HEK293T (cell line): ENCODE measurements at regions of chr3 and their contacts with region 1.

Region 1: GRCh38 chr3:49120438-49121131 is at the start of gene USP19:
- DNase-seq: peak; percentile 96

Region 2: GRCh38 chr3:48623851-48624547 is 496.6 kb before region 1 on chr3:
- CTCF ChIA-PET with region 1: no interaction called
- POLR2A ChIA-PET with region 1: no interaction called
- DNase-seq: no peak

Region 3: GRCh38 chr3:48684480-48685143 is 436.0 kb before region 1 on chr3:
- CTCF ChIA-PET with region 1: no interaction called
- POLR2A ChIA-PET with region 1: no interaction called
- DNase-seq: no peak

Region 4: GRCh38 chr3:48798998-48799397 is 321.6 kb before region 1 on chr3:
- CTCF ChIA-PET with region 1: no interaction called
- POLR2A ChIA-PET with region 1: no interaction called
- DNase-seq: no peak

Region 5: DNA sequence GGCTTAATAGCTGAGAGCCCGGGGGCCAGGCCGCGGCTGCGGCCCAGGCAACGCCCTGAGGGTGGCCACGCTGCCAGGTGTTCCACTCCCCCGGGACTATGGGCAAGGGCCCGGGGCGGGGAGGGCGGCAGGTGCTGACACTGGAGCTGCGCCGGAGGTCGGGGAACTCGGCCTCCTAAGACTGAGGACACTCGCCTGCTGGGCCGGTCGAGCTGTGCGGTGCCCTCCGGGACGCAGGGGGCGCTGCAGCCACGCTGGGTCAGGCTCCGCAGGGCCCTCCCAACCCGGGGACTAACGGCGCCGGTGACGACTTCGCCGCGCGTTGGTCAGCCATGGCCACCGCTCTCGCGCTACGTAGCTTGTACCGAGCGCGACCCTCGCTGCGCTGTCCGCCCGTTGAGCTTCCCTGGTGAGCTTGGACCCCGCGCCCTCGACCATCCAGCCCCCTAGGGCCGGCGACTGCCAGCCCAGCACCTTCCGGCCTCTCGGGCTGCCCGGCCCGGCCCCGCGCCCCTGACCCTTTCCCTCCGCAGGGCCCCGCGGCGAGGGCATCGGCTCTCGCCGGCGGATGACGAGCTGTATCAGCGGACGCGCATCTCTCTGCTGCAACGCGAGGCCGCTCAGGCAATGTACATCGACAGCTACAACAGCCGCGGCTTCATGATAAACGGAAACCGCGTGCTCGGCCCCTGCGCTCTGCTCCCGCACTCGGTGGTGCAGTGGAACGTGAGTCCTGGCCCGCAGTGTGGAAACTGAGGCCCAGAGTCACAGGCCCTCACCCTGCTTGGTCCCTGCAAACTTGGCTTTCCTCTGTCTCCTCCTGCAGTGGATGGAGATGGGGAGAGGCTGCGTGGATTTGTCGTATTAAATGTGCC is 98.5 kb before region 1 on chr3 and contains the start of gene NDUFAF3:
- CTCF ChIA-PET with region 1: no interaction called
- POLR2A ChIA-PET with region 1: interaction called, 10 read pairs
- DNase-seq: peak; percentile 85

Region 6: GRCh38 chr3:49104483-49105291 is 15.9 kb before region 1 on chr3 and contains the start of gene QARS1:
- CTCF ChIA-PET with region 1: no interaction called
- POLR2A ChIA-PET with region 1: interaction called, 13 read pairs
- DNase-seq: peak; percentile 95

Region 7: DNA sequence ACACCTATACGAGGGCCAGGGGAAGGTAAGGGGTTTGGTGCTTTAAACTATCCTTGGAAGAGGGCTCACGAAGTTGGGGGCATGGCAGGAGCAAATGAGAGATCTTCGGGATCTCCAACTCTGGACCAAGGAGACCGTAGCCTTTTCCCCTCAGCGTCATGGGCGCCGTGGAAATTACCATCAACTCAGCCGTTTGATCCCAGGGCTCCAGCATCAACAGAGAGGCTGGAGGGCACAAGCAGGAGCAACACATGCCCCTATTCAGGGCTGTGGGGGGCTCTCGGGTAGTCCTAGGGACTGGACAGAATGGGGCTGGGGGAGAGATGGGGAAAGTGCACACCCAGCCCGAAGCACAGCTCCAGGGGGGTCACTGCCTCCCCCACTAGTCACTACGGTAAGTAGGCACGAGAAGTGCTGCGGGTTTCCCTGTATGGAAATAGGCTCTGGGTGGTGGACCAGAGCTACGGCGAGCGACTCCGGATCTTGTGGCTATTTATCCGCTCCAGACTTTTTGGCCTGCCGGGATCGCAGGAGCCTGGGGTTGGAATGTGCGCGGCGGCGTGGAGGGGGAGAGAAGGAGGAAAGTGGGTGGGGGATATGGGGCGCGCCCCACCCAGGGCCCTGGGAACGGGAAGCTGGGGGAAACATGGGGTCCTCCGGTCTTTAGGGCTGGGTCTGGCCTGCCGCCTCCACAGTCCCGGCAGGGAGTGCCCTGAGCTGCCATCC is 12.8 kb after region 1 on chr3:
- CTCF ChIA-PET with region 1: no interaction called
- POLR2A ChIA-PET with region 1: interaction called, 66 read pairs
- DNase-seq: peak; percentile 86

Region 8: GRCh38 chr3:49217688-49218470 is 97.3 kb after region 1 on chr3:
- CTCF ChIA-PET with region 1: no interaction called
- POLR2A ChIA-PET with region 1: no interaction called
- DNase-seq: no peak